ENCODE measurements at regions of chr11 and their contacts with region 1.

Region 1: DNA sequence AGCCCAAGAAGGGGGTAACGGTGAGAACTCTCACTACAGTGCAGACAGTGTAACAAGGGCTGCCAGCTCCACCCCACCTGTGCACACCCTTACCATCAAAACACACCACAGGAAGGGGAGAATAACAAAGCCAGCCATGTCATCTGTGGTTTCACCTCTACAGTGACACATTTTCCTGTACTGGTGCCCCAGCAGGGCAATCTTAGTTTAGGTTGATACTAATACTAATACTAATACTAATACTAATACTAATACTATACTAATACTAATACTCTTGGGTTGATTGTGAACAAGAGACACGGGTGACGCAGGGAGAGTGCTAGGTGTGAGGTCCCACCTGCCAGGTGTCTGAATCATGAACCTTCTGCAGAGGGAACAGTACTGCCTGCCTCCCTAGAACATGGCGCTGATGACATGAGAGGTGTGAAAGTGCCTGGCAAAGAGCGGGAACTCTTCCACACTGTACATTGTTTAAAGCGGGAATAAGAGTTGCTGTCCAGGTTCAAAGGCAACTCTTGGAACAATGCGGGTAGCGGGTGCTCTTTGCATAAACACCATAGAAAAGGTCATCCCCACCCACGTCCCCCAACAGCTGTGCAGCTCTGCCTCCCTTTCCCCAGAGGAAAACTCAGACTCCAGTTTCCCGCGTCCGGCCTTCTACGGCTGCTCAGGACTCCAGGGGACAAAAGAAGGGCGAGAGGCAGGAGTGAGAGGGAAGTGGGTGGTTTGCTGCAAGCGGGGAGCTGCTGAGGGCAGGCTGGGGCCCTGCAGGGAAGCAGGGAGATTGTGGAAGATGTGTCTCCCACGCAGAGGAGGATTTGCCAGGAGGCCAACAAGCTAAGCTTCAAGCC is 25.0 kb upstream of the TMPRSS4 start:
- DNase-seq: peak in 8 of 9 donors; percentile 34 to 91 (median 88)
- ATAC-seq: peak; percentile 98
- H3K4me3 ChIP-seq: peak overlapping the region; percentile 29
- H3K4me3 Mint-ChIP-seq: peak overlapping the region; percentile 74 to 94 (median 80)
- H3K27ac ChIP-seq: peak overlapping the region; percentile 65
- H3K27ac Mint-ChIP-seq: peak overlapping the region; percentile 94 to 100 (median 96)
- H3K4me1 ChIP-seq: peaks cover 60 to 65% of the 10 kb centered on the region in 2 donors
- H3K4me1 Mint-ChIP-seq: peaks cover 45 to 64% (median 57%) of the 10 kb centered on the region in 7 donors
- H3K27me3 ChIP-seq: no peaks in the 10 kb centered on the region
- H3K27me3 Mint-ChIP-seq: no peaks in the 10 kb centered on the region

Region 2: GRCh38 chr11:117426269-117426685 is 625.6 kb before region 1 on chr11:
- CTCF ChIA-PET with region 1: interaction called, 7 read pairs
- POLR2A ChIA-PET with region 1: no interaction called
- intact Hi-C with region 1: loop called in 1 of 2 experiments (anchors 5 kb)
- DNase-seq: peak; percentile 7 to 77 (median 48)
- ATAC-seq: peak; percentile 73
- H3K4me3 ChIP-seq: no peak overlapping the region
- H3K4me3 Mint-ChIP-seq: peak overlapping the region in 5 of 10 donors; percentile 20 to 53 (median 42)
- H3K27ac ChIP-seq: no peak overlapping the region
- H3K27ac Mint-ChIP-seq: no peak overlapping the region
- H3K4me1 ChIP-seq: no peaks in the 10 kb centered on the region
- H3K4me1 Mint-ChIP-seq: peaks cover 0 to 13% (median 10%) of the 10 kb centered on the region in 7 donors
- H3K27me3 ChIP-seq: no peaks in the 10 kb centered on the region
- H3K27me3 Mint-ChIP-seq: peaks cover 0 to 15% (median 3%) of the 10 kb centered on the region in 5 donors

Region 3: DNA sequence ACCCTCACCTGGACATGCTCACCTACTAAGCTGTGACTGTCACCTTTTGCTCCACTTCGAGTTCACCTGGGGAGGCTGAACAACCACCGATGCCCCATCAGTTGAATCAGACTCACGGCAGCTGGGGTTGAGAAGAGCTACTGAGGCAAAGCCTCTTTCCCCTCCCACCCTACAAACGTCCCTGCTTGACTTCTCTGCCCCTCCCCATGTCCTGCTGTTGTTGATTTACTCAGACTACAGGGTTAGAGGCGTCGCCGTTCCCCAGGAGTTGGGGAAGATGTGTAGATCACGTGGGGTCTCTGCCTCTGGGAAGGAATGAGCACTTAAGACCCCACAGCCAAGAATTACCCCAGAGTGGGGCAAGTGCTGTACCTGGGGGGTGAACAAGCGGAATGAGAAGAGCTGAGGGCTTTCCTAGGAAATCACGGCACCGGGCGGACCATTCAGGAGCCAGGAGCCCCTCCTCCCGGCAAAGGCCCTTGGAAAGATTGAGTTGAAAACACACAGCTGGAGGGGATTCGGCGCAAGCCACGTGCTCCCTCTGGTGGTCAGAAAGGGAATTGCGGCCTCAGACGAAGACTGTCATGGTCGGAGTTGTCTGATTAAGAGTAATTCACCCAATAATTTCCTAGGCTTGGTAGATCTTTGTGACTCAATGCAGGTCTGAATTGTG is 234.3 kb before region 1 on chr11:
- CTCF ChIA-PET with region 1: interaction called, 79 read pairs
- POLR2A ChIA-PET with region 1: interaction called, 6 read pairs
- intact Hi-C with region 1: loop called in 1 of 2 experiments (anchors 1 kb)
- DNase-seq: peak; percentile 64 to 91 (median 76)
- ATAC-seq: peak; percentile 46
- H3K4me3 ChIP-seq: no peak overlapping the region
- H3K4me3 Mint-ChIP-seq: peak overlapping the region; percentile 4 to 83 (median 38)
- H3K27ac ChIP-seq: no peak overlapping the region
- H3K27ac Mint-ChIP-seq: peak overlapping the region; percentile 61 to 93 (median 80)
- H3K4me1 ChIP-seq: peaks cover 44 to 56% of the 10 kb centered on the region in 2 donors
- H3K4me1 Mint-ChIP-seq: peaks cover 35 to 63% (median 51%) of the 10 kb centered on the region in 7 donors
- H3K27me3 ChIP-seq: no peaks in the 10 kb centered on the region
- H3K27me3 Mint-ChIP-seq: no peaks in the 10 kb centered on the region

Region 4: GRCh38 chr11:117843666-117844484 is 208.0 kb before region 1 on chr11:
- CTCF ChIA-PET with region 1: interaction called, 153 read pairs
- POLR2A ChIA-PET with region 1: interaction called, 24 read pairs
- intact Hi-C with region 1: loop called (anchors 1 kb)
- DNase-seq: peak; percentile 63 to 84 (median 72)
- ATAC-seq: peak; percentile 78
- H3K4me3 ChIP-seq: no peak overlapping the region
- H3K4me3 Mint-ChIP-seq: no peak overlapping the region
- H3K27ac ChIP-seq: no peak overlapping the region
- H3K27ac Mint-ChIP-seq: peak overlapping the region in 2 of 9 donors; percentile 46 to 51
- H3K4me1 ChIP-seq: peaks cover 6 to 9% of the 10 kb centered on the region in 2 donors
- H3K4me1 Mint-ChIP-seq: peaks cover 0 to 10% (median 0%) of the 10 kb centered on the region in 7 donors
- H3K27me3 ChIP-seq: no peaks in the 10 kb centered on the region
- H3K27me3 Mint-ChIP-seq: peaks cover 0 to 32% (median 0%) of the 10 kb centered on the region in 5 donors

Region 5: DNA sequence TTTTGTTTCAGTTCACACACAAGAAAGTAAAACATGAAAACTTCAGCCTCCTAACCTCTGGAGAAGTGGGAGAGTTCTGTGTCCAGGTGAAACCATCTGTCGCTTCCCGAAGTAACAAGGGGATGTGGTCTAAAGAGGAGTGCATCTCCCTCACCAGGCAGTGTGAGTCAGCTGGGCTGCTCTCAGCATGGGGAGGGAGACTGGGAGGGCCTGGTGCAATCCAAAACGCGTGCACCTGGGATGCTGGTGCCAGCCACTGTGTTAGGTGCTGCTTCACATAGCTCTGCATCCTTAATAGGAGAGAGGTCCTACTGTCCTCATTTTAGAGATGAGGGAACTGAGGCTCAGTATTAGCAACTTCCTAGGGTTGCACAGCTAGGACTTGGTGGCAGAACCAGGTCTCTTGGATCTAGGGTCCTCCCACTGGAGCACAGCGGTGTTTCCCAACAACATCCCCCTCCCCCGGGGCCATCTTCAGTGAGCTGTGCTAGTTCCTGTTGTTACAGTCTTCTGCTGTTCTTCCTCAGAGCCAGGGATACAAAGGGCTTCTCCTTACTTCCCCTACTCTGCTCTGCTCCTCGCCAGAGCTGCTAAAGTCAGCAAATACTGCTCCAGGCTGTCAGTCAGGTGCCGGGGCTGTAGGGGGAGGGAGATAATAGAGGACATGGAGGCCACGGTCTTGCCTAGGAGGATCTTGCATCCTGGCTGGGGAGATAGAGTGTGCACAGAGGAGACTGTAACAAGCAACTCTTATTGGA is 57.7 kb before region 1 on chr11:
- CTCF ChIA-PET with region 1: interaction called, 15 read pairs
- POLR2A ChIA-PET with region 1: interaction called, 75 read pairs
- intact Hi-C with region 1: no loop called
- DNase-seq: no peak
- ATAC-seq: peak; percentile 14
- H3K4me3 ChIP-seq: no peak overlapping the region
- H3K4me3 Mint-ChIP-seq: peak overlapping the region in 3 of 10 donors; percentile 40 to 80 (median 55)
- H3K27ac ChIP-seq: peak overlapping the region; percentile 51
- H3K27ac Mint-ChIP-seq: peak overlapping the region; percentile 40 to 92 (median 78)
- H3K4me1 ChIP-seq: peaks cover 55 to 89% of the 10 kb centered on the region in 2 donors
- H3K4me1 Mint-ChIP-seq: peaks cover 50 to 91% (median 63%) of the 10 kb centered on the region in 7 donors
- H3K27me3 ChIP-seq: no peaks in the 10 kb centered on the region
- H3K27me3 Mint-ChIP-seq: no peaks in the 10 kb centered on the region

Region 6: GRCh38 chr11:118010738-118011461 is 40.9 kb before region 1 on chr11:
- CTCF ChIA-PET with region 1: interaction called, 5 read pairs
- POLR2A ChIA-PET with region 1: interaction called, 16 read pairs
- intact Hi-C with region 1: loop called in 1 of 2 experiments (anchors 1 kb)
- DNase-seq: no peak
- ATAC-seq: peak; percentile 76
- H3K4me3 ChIP-seq: no peak overlapping the region
- H3K4me3 Mint-ChIP-seq: peak overlapping the region in 1 of 10 donors; percentile 56
- H3K27ac ChIP-seq: no peak overlapping the region
- H3K27ac Mint-ChIP-seq: peak overlapping the region in 4 of 9 donors; percentile 9 to 92 (median 52)
- H3K4me1 ChIP-seq: peaks cover 72 to 98% of the 10 kb centered on the region in 2 donors
- H3K4me1 Mint-ChIP-seq: peaks cover 82 to 93% (median 85%) of the 10 kb centered on the region in 7 donors
- H3K27me3 ChIP-seq: no peaks in the 10 kb centered on the region
- H3K27me3 Mint-ChIP-seq: no peaks in the 10 kb centered on the region